Calu3 (cell line): ENCODE measurements at regions of chr5 and their contacts with region 1.

Region 1: DNA sequence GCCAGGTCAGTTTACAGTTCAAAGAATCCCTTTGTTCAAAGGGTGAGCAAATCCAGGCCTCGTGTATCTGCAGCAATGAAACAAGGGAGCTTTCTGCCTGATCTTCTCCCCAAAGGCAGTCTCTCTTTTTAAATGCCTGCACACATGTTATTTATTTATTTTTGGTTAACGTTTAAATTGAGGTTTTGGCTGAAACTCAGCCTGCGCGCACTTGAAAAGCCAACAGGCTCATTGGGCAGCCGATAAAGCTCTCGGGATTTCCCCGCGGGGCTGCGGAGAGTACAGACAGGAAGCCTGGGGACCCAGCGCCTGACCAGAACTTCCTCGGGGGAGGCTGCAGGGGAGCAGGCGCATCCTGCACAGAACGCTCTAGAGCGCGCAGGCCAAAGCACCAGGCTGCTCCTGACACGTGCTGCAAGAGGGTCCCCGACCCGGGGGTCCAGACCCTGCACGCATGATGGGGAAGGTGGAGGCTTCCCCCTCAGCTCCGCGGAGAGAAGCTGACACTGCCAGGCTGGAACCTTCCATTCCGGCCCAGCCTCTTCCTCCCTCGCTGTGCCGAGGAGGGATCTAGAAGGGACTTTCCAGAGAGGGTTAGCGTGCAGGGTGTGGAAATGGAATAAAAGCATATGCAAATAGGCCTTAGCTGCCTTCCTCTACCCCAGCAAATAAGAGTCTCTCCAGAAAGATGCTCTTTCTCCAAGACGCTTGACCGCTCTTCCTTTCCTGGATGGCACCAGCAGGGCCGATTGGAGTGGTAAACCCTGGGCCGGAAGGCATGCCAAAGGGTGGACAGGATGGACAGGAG is 46.1 kb downstream of the PTTG1 start:
- DNase-seq: peak; percentile 95
- H3K4me3 Mint-ChIP-seq: peak overlapping the region; percentile 89
- H3K27ac Mint-ChIP-seq: peak overlapping the region; percentile 95
- H3K4me1 Mint-ChIP-seq: peaks cover 86% of the 10 kb centered on the region
- H3K27me3 Mint-ChIP-seq: no peaks in the 10 kb centered on the region
- CTCF ChIP-seq: no peak

Region 2: GRCh38 chr5:160213537-160213936 is 254.2 kb before region 1 on chr5:
- CTCF ChIA-PET with region 1: no interaction called
- intact Hi-C with region 1: no loop called
- DNase-seq: no peak
- H3K4me3 Mint-ChIP-seq: no peak overlapping the region
- H3K27ac Mint-ChIP-seq: no peak overlapping the region
- H3K4me1 Mint-ChIP-seq: peaks cover 26% of the 10 kb centered on the region
- H3K27me3 Mint-ChIP-seq: no peaks in the 10 kb centered on the region
- CTCF ChIP-seq: no peak

Region 3: DNA sequence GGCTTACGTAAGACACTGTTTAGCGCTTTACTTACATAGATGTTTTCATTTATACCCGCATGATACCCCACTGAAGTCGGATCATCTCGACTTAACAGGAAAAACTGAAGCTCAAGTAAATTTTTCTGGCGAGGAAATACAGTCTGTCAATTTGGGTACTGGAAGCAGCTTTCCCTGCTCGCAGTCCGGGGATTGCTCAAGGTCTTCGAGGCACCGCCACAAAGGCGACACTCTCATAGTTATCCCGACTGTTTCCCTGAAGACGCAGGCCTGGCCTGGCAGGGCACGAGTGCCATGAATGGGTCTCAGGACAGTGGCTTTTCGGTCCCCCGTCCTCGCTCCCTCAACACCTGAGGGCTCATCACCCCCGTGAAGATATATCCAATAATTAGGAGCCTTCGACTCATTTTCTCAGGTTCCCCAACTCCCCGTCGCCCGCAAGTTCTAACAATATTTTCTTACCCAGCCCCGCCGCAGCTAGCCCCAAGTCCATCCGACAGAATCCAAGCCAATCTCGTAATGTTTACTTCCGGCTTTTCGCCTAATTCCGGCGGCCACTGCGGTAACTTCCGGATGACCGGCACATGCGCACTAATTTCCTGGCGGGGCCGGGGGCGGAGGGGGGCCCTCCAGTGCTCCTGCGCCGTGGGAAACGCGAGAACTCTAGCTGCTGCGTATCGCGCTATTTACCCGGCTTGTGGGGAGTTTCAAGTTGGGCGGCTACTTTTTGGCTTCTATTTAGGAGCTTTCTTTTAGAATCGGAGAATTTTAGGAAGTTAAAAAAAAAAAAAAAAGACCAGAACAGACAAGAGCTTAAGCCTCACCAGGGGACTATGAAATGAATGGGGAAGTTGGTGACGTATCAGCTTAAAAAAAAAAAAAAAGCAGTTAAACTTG is 49.0 kb before region 1 on chr5 and contains the start of gene SLU7:
- CTCF ChIA-PET with region 1: interaction called, 9 read pairs
- intact Hi-C with region 1: loop called (anchors 5 kb)
- DNase-seq: peak; percentile 97
- H3K4me3 Mint-ChIP-seq: peak within 1 kb of the TSS; percentile 95
- H3K27ac Mint-ChIP-seq: peak within 1 kb of the TSS; percentile 97
- H3K4me1 Mint-ChIP-seq: peaks cover 70% of the 10 kb centered on the region
- H3K27me3 Mint-ChIP-seq: no peaks in the 10 kb centered on the region
- CTCF ChIP-seq: no peak
- total RNA-seq, gene SLU7: 62.8 and 71.2 TPM in 2 replicates

Region 4: GRCh38 chr5:160432196-160432595 is 35.6 kb before region 1 on chr5:
- CTCF ChIA-PET with region 1: no interaction called
- intact Hi-C with region 1: no loop called
- DNase-seq: no peak
- H3K4me3 Mint-ChIP-seq: no peak overlapping the region
- H3K27ac Mint-ChIP-seq: no peak overlapping the region
- H3K4me1 Mint-ChIP-seq: peaks cover 14% of the 10 kb centered on the region
- H3K27me3 Mint-ChIP-seq: peaks cover 17% of the 10 kb centered on the region
- CTCF ChIP-seq: no peak

Region 5: DNA sequence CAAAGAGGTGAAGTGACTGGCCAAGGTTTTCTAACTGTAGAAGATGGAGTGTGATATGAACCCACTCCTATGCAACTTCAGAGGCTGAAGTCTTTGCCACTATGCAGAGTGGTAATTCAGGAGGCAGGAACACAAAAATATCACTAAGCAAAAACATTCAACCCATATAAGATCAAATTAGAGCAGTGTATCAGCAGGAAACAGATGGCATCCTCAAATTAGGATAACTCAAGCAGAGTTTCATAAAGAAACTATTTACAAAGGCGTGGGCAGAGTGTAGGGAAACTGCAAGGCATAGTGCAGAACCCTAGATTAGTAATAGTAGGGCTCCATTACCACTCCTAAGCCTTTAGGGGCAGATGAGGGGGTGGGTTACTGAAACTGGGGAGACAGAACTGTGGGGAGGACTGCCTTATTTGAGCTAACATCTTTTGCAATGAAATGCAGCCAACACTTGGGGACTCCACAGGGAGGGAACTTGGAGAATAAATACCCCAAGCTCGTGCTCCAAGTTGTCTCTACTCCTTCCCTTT is 26.1 kb after region 1 on chr5:
- CTCF ChIA-PET with region 1: no interaction called
- intact Hi-C with region 1: no loop called
- DNase-seq: no peak
- H3K4me3 Mint-ChIP-seq: no peak overlapping the region
- H3K27ac Mint-ChIP-seq: no peak overlapping the region
- H3K4me1 Mint-ChIP-seq: no peaks in the 10 kb centered on the region
- H3K27me3 Mint-ChIP-seq: no peaks in the 10 kb centered on the region
- CTCF ChIP-seq: no peak

Region 6: GRCh38 chr5:160824301-160825001 is 356.7 kb after region 1 on chr5:
- CTCF ChIA-PET with region 1: no interaction called
- intact Hi-C with region 1: no loop called
- DNase-seq: no peak
- H3K4me3 Mint-ChIP-seq: no peak overlapping the region
- H3K27ac Mint-ChIP-seq: no peak overlapping the region
- H3K4me1 Mint-ChIP-seq: no peaks in the 10 kb centered on the region
- H3K27me3 Mint-ChIP-seq: no peaks in the 10 kb centered on the region
- CTCF ChIP-seq: no peak